Activated T-helper 1 cell treated with anti-CD3 and anti-CD28 coated beads, Interleukin-12 subunit alpha, Interleukin-12 subunit beta, Interleukin-2, Interleukin-4 antibody, amounts not matched to agents 30 ng/mL and 10 ng/mL and 1 ng/mL, durations not matched to agents 14 hours and 24 hours and 36 hours (primary cell): ENCODE measurements at regions of chr4 and their contacts with region 1.

Region 1: DNA sequence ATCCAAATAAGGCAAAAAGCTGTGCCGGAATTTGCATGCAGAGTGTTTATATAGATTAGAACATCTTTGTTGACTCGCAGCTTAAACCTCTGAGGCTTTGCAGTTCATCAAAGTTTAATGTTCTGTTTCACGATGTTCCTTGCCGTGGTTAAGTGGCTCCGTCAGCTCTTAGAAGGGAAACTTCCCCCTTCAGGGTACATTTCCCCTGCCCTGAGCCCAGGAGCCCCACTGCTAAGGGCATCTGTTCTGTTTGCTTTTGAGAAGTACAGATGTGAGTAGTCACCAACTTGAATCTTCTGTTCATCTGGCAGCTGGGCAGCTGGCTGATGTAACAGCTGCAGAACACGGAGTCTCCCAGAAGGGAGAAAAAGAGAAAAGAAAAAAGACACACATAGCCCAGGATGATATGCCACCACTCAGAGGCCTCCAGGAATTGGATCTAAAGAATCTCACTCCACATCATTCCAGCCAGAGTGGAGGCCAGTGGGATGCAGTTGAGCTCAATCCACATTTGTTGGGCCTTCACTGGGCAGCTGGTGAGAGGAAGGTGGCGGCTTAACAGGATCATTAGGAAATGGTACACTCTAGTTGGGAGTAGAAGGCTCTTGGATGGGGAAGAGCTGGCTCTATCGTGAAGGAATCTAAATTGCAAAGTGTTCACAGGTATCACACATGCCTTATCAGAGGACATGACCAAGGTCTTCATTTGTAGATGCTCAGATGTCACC is 178.7 kb upstream of the RBPJ start:
- DNase-seq: no peak
- H3K4me3 Mint-ChIP-seq: peak overlapping the region; percentile 3
- H3K27ac Mint-ChIP-seq: peak overlapping the region; percentile 78
- H3K4me1 Mint-ChIP-seq: peaks cover 67% of the 10 kb centered on the region
- H3K27me3 Mint-ChIP-seq: no peaks in the 10 kb centered on the region

Region 2: GRCh38 chr4:25986807-25987206 is 155.3 kb before region 1 on chr4:
- intact Hi-C with region 1: loop called (anchors 5 kb)
- DNase-seq: no peak
- H3K4me3 Mint-ChIP-seq: no peak overlapping the region
- H3K27ac Mint-ChIP-seq: no peak overlapping the region
- H3K4me1 Mint-ChIP-seq: peaks cover 8% of the 10 kb centered on the region
- H3K27me3 Mint-ChIP-seq: peaks cover 2% of the 10 kb centered on the region

Region 3: GRCh38 chr4:26081795-26082498 is 60.1 kb before region 1 on chr4:
- intact Hi-C with region 1: loop called (anchors 1 kb)
- DNase-seq: no peak
- H3K4me3 Mint-ChIP-seq: peak overlapping the region; percentile 48
- H3K27ac Mint-ChIP-seq: peak overlapping the region; percentile 81
- H3K4me1 Mint-ChIP-seq: peaks cover 83% of the 10 kb centered on the region
- H3K27me3 Mint-ChIP-seq: no peaks in the 10 kb centered on the region

Region 4: GRCh38 chr4:26088433-26088928 is 53.6 kb before region 1 on chr4:
- intact Hi-C with region 1: loop called (anchors 1 kb)
- DNase-seq: peak; percentile 34
- H3K4me3 Mint-ChIP-seq: peak overlapping the region; percentile 71
- H3K27ac Mint-ChIP-seq: peak overlapping the region; percentile 94
- H3K4me1 Mint-ChIP-seq: peaks cover 68% of the 10 kb centered on the region
- H3K27me3 Mint-ChIP-seq: no peaks in the 10 kb centered on the region

Region 5: GRCh38 chr4:26130173-26130572 is 11.9 kb before region 1 on chr4:
- intact Hi-C with region 1: loop called (anchors 1 kb)
- DNase-seq: no peak
- H3K4me3 Mint-ChIP-seq: no peak overlapping the region
- H3K27ac Mint-ChIP-seq: peak overlapping the region; percentile 65
- H3K4me1 Mint-ChIP-seq: peaks cover 81% of the 10 kb centered on the region
- H3K27me3 Mint-ChIP-seq: no peaks in the 10 kb centered on the region

Region 6: DNA sequence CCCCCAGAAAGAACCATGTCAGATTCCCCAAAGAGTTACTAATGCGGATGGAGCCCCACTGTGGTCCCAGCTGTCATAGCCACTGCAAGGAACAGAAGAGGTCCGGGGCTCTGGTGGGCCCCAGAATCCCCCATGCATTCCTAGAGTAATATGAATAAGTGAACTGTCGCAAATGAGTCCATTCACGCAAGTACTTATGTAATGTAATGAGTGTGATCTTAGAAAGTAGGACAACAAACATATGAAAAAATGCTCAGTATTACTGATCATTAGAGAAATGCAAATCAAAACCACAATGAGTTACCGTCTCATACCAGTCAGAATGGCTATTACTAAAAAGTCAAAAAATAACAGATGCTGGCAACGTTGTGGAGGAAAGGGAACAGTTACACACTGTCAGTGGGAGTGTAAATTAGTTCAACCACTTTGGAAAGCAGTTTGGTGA is 37.3 kb after region 1 on chr4:
- intact Hi-C with region 1: loop called (anchors 1 kb)
- DNase-seq: no peak
- H3K4me3 Mint-ChIP-seq: no peak overlapping the region
- H3K27ac Mint-ChIP-seq: peak overlapping the region; percentile 64
- H3K4me1 Mint-ChIP-seq: peaks cover 44% of the 10 kb centered on the region
- H3K27me3 Mint-ChIP-seq: no peaks in the 10 kb centered on the region

Region 7: DNA sequence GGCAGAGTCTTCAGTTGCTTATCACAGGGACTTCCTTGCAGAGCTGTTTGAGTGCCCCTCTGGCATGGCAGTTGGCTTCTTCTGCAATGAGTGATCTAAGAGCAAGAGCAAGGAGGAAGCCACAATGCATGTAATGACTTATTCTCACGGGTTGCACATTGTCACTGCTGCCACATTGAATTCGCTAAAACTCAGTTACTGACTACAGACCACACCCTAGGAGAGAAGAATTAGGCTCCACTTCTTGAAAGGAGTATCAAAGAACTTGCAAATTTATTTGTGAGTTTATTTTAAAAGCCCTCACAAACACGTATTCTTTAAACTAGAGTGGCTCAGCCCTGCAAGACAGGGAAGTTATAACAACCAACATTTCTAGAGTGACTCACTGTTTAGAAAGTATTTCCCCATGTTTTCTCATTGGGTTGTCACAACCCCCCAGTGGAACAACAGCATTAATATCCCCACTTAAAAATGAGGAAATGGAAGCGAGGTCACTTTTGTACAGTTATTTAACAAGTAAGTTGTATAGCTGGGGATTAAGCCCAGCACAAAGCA is 146.4 kb after region 1 on chr4:
- intact Hi-C with region 1: no loop called
- DNase-seq: peak; percentile 20
- H3K4me3 Mint-ChIP-seq: peak overlapping the region; percentile 25
- H3K27ac Mint-ChIP-seq: peak overlapping the region; percentile 61
- H3K4me1 Mint-ChIP-seq: peaks cover 32% of the 10 kb centered on the region
- H3K27me3 Mint-ChIP-seq: no peaks in the 10 kb centered on the region